ENCODE measurements at regions of chr1 and their contacts with region 1.

Region 1: DNA sequence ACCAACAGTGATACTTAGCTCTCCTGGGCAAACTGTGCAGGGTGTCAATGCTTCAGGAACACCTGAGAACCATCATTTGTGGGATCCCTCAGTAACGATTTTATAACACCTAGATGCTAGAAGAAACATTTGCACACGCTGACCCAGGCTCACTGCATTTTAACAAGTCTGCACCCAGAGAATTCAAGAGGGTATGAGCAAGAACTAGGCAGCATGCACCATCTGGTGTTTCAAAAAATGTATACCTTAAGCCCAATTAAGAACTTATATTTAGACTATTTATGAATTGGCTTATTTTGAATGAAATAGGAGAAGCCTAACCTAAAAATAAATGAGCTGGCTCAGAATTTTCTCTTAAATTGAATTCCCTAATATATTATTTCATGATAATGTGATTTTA is 400.5 kb downstream of the GPATCH2 start:
- DNase-seq: no peak
- H3K4me3 Mint-ChIP-seq: no peak overlapping the region
- H3K27ac Mint-ChIP-seq: no peak overlapping the region
- H3K4me1 Mint-ChIP-seq: no peaks in the 10 kb centered on the region
- H3K27me3 Mint-ChIP-seq: no peaks in the 10 kb centered on the region
- CTCF ChIP-seq: no peak

Region 2: GRCh38 chr1:216902669-216903381 is 327.6 kb before region 1 on chr1:
- CTCF ChIA-PET with region 1: no interaction called
- intact Hi-C with region 1: loop called (anchors 5 kb)
- DNase-seq: peak; percentile 50
- H3K4me3 Mint-ChIP-seq: peak overlapping the region; percentile 9
- H3K27ac Mint-ChIP-seq: peak overlapping the region; percentile 14
- H3K4me1 Mint-ChIP-seq: peaks cover 31% of the 10 kb centered on the region
- H3K27me3 Mint-ChIP-seq: no peaks in the 10 kb centered on the region
- CTCF ChIP-seq: no peak

Region 3: GRCh38 chr1:217089361-217090014 is 140.9 kb before region 1 on chr1:
- CTCF ChIA-PET with region 1: no interaction called
- intact Hi-C with region 1: no loop called
- DNase-seq: peak; percentile 42
- H3K4me3 Mint-ChIP-seq: peak overlapping the region; percentile 78
- H3K27ac Mint-ChIP-seq: peak overlapping the region; percentile 6
- H3K4me1 Mint-ChIP-seq: peaks cover 21% of the 10 kb centered on the region
- H3K27me3 Mint-ChIP-seq: no peaks in the 10 kb centered on the region
- CTCF ChIP-seq: no peak